Mammary epithelial cell (primary cell): ENCODE measurements at regions of chr1 and their contacts with region 1.

Region 1: GRCh38 chr1:179293340-179294327 is at the start of gene SOAT1:
- DNase-seq: peak; percentile 74
- H3K4me3 ChIP-seq: peak within 1 kb of the TSS; percentile 68 to 97 (median 85)
- H3K27ac ChIP-seq: peak within 1 kb of the TSS; percentile 52
- H3K4me1 ChIP-seq: peaks cover 6% of the 10 kb centered on the region
- H3K27me3 ChIP-seq: no peaks in the 10 kb centered on the region
- CTCF ChIP-seq: no peak
- total RNA-seq, gene SOAT1: 22.3 to 40.3 TPM

Region 2: DNA sequence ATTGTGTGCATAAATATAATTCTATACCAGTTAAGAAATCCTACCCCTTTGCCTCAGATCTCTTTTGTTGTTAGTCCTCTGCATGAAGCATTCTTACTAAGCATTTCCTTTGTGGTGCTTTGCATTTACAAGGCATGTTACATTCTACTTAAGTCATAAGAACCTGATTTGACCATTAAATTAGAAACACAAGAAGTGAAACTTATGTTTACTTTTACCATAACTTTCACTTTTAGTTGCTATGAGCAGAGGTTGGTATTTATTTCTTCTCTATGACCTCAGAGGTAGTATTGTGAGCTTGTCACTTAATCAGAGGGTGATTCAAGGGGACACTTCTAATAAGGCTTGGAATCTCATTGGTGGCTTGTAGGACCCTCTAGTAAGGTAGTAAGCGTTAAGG is 258.9 kb before region 1 on chr1:
- CTCF ChIA-PET with region 1: no interaction called
- dilution Hi-C with region 1: no loop called
- in situ Hi-C with region 1: no loop called
- intact Hi-C with region 1: no loop called
- DNase-seq: no peak
- H3K4me3 ChIP-seq: no peak overlapping the region
- H3K27ac ChIP-seq: no peak overlapping the region
- H3K4me1 ChIP-seq: peaks cover 43% of the 10 kb centered on the region
- H3K27me3 ChIP-seq: no peaks in the 10 kb centered on the region
- CTCF ChIP-seq: no peak

Region 3: GRCh38 chr1:179081687-179082332 is 211.8 kb before region 1 on chr1 and contains the start of gene TOR3A:
- CTCF ChIA-PET with region 1: no interaction called
- dilution Hi-C with region 1: no loop called
- in situ Hi-C with region 1: no loop called
- intact Hi-C with region 1: loop called (anchors 1 kb)
- DNase-seq: peak; percentile 89
- H3K4me3 ChIP-seq: peak within 1 kb of the TSS; percentile 56 to 91 (median 84)
- H3K27ac ChIP-seq: peak within 1 kb of the TSS; percentile 50
- H3K4me1 ChIP-seq: peaks cover 5% of the 10 kb centered on the region
- H3K27me3 ChIP-seq: no peaks in the 10 kb centered on the region
- CTCF ChIP-seq: no peak
- total RNA-seq, gene TOR3A: 33.5 to 38.0 TPM

Region 4: GRCh38 chr1:179121159-179121938 is 172.3 kb before region 1 on chr1:
- CTCF ChIA-PET with region 1: no interaction called
- dilution Hi-C with region 1: no loop called
- in situ Hi-C with region 1: no loop called
- intact Hi-C with region 1: loop called (anchors 5 kb)
- DNase-seq: no peak
- H3K4me3 ChIP-seq: no peak overlapping the region
- H3K27ac ChIP-seq: no peak overlapping the region
- H3K4me1 ChIP-seq: peaks cover 21% of the 10 kb centered on the region
- H3K27me3 ChIP-seq: no peaks in the 10 kb centered on the region
- CTCF ChIP-seq: peak; percentile 55 to 64

Region 5: DNA sequence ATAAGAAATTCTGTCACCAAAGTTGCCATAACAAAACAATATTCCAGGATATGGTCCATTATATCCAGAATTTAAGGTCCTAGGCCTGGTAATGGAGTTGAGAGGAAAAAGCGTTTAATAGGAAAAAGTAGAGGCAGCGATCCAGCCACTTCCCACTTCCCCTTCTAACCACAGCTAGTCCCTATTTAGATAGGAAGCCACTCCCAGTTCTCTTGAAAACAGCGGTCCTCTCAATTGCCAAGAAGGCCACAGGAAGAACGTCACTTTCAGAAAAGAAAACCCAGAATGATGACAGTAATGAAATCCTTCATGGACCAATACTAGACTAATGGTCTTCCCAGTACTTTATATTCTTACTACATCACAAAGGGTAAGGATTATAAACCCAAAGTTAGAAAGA is 102.8 kb before region 1 on chr1:
- CTCF ChIA-PET with region 1: no interaction called
- dilution Hi-C with region 1: no loop called
- in situ Hi-C with region 1: no loop called
- intact Hi-C with region 1: loop called (anchors 2 kb)
- DNase-seq: no peak
- H3K4me3 ChIP-seq: no peak overlapping the region
- H3K27ac ChIP-seq: no peak overlapping the region
- H3K4me1 ChIP-seq: no peaks in the 10 kb centered on the region
- H3K27me3 ChIP-seq: no peaks in the 10 kb centered on the region
- CTCF ChIP-seq: no peak

Region 6: GRCh38 chr1:179229214-179230140 is 64.2 kb before region 1 on chr1 and contains the start of gene ABL2:
- CTCF ChIA-PET with region 1: no interaction called
- dilution Hi-C with region 1: loop called (anchors 5 kb)
- in situ Hi-C with region 1: no loop called
- intact Hi-C with region 1: no loop called
- DNase-seq: no peak
- H3K4me3 ChIP-seq: peak within 1 kb of the TSS; percentile 85 to 95 (median 93)
- H3K27ac ChIP-seq: peak within 1 kb of the TSS; percentile 44
- H3K4me1 ChIP-seq: peaks cover 31% of the 10 kb centered on the region
- H3K27me3 ChIP-seq: peaks cover 2% of the 10 kb centered on the region
- CTCF ChIP-seq: no peak
- total RNA-seq, gene ABL2: 78.2 to 161 TPM

Region 7: GRCh38 chr1:179251675-179252074 is 42.0 kb before region 1 on chr1:
- CTCF ChIA-PET with region 1: interaction called, 5 read pairs
- dilution Hi-C with region 1: no loop called
- in situ Hi-C with region 1: no loop called
- intact Hi-C with region 1: loop called (anchors 1 kb)
- DNase-seq: peak; percentile 25
- H3K4me3 ChIP-seq: no peak overlapping the region
- H3K27ac ChIP-seq: no peak overlapping the region
- H3K4me1 ChIP-seq: no peaks in the 10 kb centered on the region
- H3K27me3 ChIP-seq: no peaks in the 10 kb centered on the region
- CTCF ChIP-seq: peak; percentile 32 to 64

Region 8: DNA sequence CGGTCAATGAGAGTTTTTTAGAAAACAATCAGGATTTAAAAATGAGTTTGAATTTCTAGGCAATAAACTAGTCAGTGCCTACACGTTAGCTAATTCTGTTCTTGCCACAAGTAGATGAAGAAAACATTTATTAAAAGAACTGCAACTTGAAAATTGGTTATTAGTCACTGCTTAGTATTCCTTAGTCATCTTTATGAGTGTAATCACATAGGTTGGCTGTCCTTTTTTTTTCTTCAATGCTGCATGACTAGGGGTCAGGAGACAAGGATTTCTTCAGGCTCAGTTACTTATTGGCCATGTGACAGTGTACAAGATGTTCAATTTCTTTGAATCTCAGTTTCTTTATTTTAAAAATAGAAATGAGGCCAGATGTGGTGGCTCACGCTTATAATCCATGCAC is 17.1 kb after region 1 on chr1:
- CTCF ChIA-PET with region 1: no interaction called
- dilution Hi-C with region 1: no loop called
- in situ Hi-C with region 1: no loop called
- intact Hi-C with region 1: loop called (anchors 1 kb)
- DNase-seq: peak; percentile 92
- H3K4me3 ChIP-seq: peak overlapping the region in 1 of 3 experiments; percentile 9
- H3K27ac ChIP-seq: peak overlapping the region; percentile 95
- H3K4me1 ChIP-seq: peaks cover 10% of the 10 kb centered on the region
- H3K27me3 ChIP-seq: no peaks in the 10 kb centered on the region
- CTCF ChIP-seq: no peak